CD8-positive, alpha-beta memory T cell (primary cell): ENCODE measurements at regions of chr16 and their contacts with region 1.

Region 1: GRCh38 chr16:57576429-57576870 is 34.0 kb downstream of the ADGRG5 start:
- DNase-seq: peak; percentile 67 to 86 (median 73)
- H3K4me3 ChIP-seq: no peak overlapping the region
- H3K4me3 Mint-ChIP-seq: peak overlapping the region in 2 of 7 donors; percentile 52 to 58
- H3K27ac ChIP-seq: no peak overlapping the region
- H3K27ac Mint-ChIP-seq: peak overlapping the region; percentile 26 to 96 (median 78)
- H3K4me1 ChIP-seq: peaks cover 46% of the 10 kb centered on the region
- H3K4me1 Mint-ChIP-seq: peaks cover 46 to 52% (median 47%) of the 10 kb centered on the region in 3 donors
- H3K27me3 ChIP-seq: no peaks in the 10 kb centered on the region
- H3K27me3 Mint-ChIP-seq: peaks cover 0 to 3% of the 10 kb centered on the region in 2 donors

Region 2: GRCh38 chr16:56558024-56558747 is 1018.3 kb before region 1 on chr16:
- CTCF ChIA-PET with region 1: no interaction called
- POLR2A ChIA-PET with region 1: no interaction called
- DNase-seq: no peak
- H3K4me3 ChIP-seq: no peak overlapping the region
- H3K4me3 Mint-ChIP-seq: no peak overlapping the region
- H3K27ac ChIP-seq: no peak overlapping the region
- H3K27ac Mint-ChIP-seq: peak overlapping the region in 1 of 8 donors; percentile 47
- H3K4me1 ChIP-seq: no peaks in the 10 kb centered on the region
- H3K4me1 Mint-ChIP-seq: no peaks in the 10 kb centered on the region
- H3K27me3 ChIP-seq: no peaks in the 10 kb centered on the region
- H3K27me3 Mint-ChIP-seq: peaks cover 25 to 39% of the 10 kb centered on the region in 2 donors

Region 3: GRCh38 chr16:57591086-57591869 is 14.8 kb after region 1 on chr16:
- CTCF ChIA-PET with region 1: interaction called, 80 read pairs
- POLR2A ChIA-PET with region 1: interaction called, 11 read pairs
- DNase-seq: peak in 4 of 5 donors; percentile 50 to 80 (median 53)
- H3K4me3 ChIP-seq: no peak overlapping the region
- H3K4me3 Mint-ChIP-seq: peak overlapping the region in 6 of 7 donors; percentile 73 to 87 (median 79)
- H3K27ac ChIP-seq: no peak overlapping the region
- H3K27ac Mint-ChIP-seq: peak overlapping the region; percentile 75 to 97 (median 94)
- H3K4me1 ChIP-seq: peaks cover 37% of the 10 kb centered on the region
- H3K4me1 Mint-ChIP-seq: peaks cover 62 to 74% (median 69%) of the 10 kb centered on the region in 3 donors
- H3K27me3 ChIP-seq: no peaks in the 10 kb centered on the region
- H3K27me3 Mint-ChIP-seq: no peaks in the 10 kb centered on the region

Region 4: GRCh38 chr16:57609541-57610401 is 33.3 kb after region 1 on chr16:
- CTCF ChIA-PET with region 1: interaction called, 53 read pairs
- POLR2A ChIA-PET with region 1: interaction called, 14 read pairs
- DNase-seq: peak; percentile 37 to 84 (median 44)
- H3K4me3 ChIP-seq: peak overlapping the region; percentile 44
- H3K4me3 Mint-ChIP-seq: peak overlapping the region; percentile 31 to 87 (median 82)
- H3K27ac ChIP-seq: peak overlapping the region; percentile 57
- H3K27ac Mint-ChIP-seq: peak overlapping the region; percentile 90 to 98 (median 95)
- H3K4me1 ChIP-seq: peaks cover 33% of the 10 kb centered on the region
- H3K4me1 Mint-ChIP-seq: peaks cover 67 to 88% (median 69%) of the 10 kb centered on the region in 3 donors
- H3K27me3 ChIP-seq: no peaks in the 10 kb centered on the region
- H3K27me3 Mint-ChIP-seq: no peaks in the 10 kb centered on the region

Region 5: GRCh38 chr16:57639172-57639887 is 62.9 kb after region 1 on chr16:
- CTCF ChIA-PET with region 1: interaction called, 24 read pairs
- POLR2A ChIA-PET with region 1: no interaction called
- DNase-seq: peak in 3 of 5 donors; percentile 23 to 64 (median 64)
- H3K4me3 ChIP-seq: no peak overlapping the region
- H3K4me3 Mint-ChIP-seq: no peak overlapping the region
- H3K27ac ChIP-seq: no peak overlapping the region
- H3K27ac Mint-ChIP-seq: peak overlapping the region in 3 of 8 donors; percentile 35 to 75 (median 48)
- H3K4me1 ChIP-seq: no peaks in the 10 kb centered on the region
- H3K4me1 Mint-ChIP-seq: peaks cover 0 to 27% (median 11%) of the 10 kb centered on the region in 3 donors
- H3K27me3 ChIP-seq: no peaks in the 10 kb centered on the region
- H3K27me3 Mint-ChIP-seq: no peaks in the 10 kb centered on the region

Region 6: GRCh38 chr16:57653936-57654335 is 77.5 kb after region 1 on chr16:
- CTCF ChIA-PET with region 1: interaction called, 215 read pairs
- POLR2A ChIA-PET with region 1: no interaction called
- DNase-seq: no peak
- H3K4me3 ChIP-seq: no peak overlapping the region
- H3K4me3 Mint-ChIP-seq: no peak overlapping the region
- H3K27ac ChIP-seq: no peak overlapping the region
- H3K27ac Mint-ChIP-seq: no peak overlapping the region
- H3K4me1 ChIP-seq: peaks cover 34% of the 10 kb centered on the region
- H3K4me1 Mint-ChIP-seq: peaks cover 37 to 44% (median 39%) of the 10 kb centered on the region in 3 donors
- H3K27me3 ChIP-seq: no peaks in the 10 kb centered on the region
- H3K27me3 Mint-ChIP-seq: no peaks in the 10 kb centered on the region

Region 7: GRCh38 chr16:57700781-57701551 is 124.5 kb after region 1 on chr16:
- CTCF ChIA-PET with region 1: no interaction called
- POLR2A ChIA-PET with region 1: no interaction called
- DNase-seq: no peak
- H3K4me3 ChIP-seq: no peak overlapping the region
- H3K4me3 Mint-ChIP-seq: no peak overlapping the region
- H3K27ac ChIP-seq: peak overlapping the region; percentile 51
- H3K27ac Mint-ChIP-seq: peak overlapping the region in 1 of 8 donors; percentile 76
- H3K4me1 ChIP-seq: no peaks in the 10 kb centered on the region
- H3K4me1 Mint-ChIP-seq: no peaks in the 10 kb centered on the region
- H3K27me3 ChIP-seq: no peaks in the 10 kb centered on the region
- H3K27me3 Mint-ChIP-seq: no peaks in the 10 kb centered on the region

Region 8: DNA sequence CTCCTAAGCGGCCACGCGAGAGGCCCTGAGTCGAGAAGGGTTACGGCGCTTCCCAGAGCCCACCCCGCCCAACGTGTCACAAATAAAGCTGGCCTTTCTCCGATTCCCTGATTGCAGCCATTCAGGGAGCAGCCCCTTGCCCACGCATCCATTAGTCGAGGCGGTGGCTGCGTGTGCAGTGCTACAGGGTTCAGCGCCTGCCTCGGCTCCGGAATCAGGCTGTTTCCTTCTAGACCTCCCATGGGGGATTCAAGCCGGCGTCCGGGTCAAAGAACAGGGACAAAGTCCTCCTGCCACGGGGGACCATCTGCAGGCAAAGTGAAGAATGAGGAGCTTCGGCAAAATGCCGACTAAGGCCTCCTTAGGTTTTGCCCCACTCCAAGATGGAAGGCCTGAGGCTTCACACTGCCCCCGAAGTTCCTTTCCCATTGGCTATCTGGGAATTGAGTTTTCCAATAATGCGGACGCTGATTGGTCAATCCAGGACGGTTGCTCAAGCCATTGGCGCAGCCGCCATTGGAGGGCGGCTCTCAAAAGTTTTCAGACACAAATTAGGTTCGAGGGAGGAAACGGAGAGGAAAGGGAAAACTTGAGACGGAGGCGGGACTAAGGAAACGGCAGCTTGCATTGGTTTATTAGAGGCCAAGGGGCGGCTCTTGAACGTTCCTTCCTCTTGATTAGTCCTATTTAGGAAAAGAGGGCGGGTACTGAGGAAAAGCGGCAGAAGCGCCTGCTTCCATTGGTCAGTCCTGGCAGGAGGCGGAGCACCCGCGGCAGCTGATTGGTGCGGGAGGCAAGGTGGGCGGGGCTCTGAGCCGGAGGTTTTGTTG is 158.7 kb after region 1 on chr16:
- CTCF ChIA-PET with region 1: interaction called, 29 read pairs
- POLR2A ChIA-PET with region 1: no interaction called
- DNase-seq: peak; percentile 96 to 99 (median 99)
- H3K4me3 ChIP-seq: peak overlapping the region; percentile 90
- H3K4me3 Mint-ChIP-seq: peak overlapping the region; percentile 91 to 100 (median 96)
- H3K27ac ChIP-seq: peak overlapping the region; percentile 87
- H3K27ac Mint-ChIP-seq: peak overlapping the region; percentile 79 to 100 (median 96)
- H3K4me1 ChIP-seq: peaks cover 25% of the 10 kb centered on the region
- H3K4me1 Mint-ChIP-seq: peaks cover 30 to 44% (median 38%) of the 10 kb centered on the region in 3 donors
- H3K27me3 ChIP-seq: no peaks in the 10 kb centered on the region
- H3K27me3 Mint-ChIP-seq: peaks cover 0 to 5% of the 10 kb centered on the region in 2 donors